H1 (cell line): ENCODE measurements at regions of chr5 and their contacts with region 1.

Region 1: DNA sequence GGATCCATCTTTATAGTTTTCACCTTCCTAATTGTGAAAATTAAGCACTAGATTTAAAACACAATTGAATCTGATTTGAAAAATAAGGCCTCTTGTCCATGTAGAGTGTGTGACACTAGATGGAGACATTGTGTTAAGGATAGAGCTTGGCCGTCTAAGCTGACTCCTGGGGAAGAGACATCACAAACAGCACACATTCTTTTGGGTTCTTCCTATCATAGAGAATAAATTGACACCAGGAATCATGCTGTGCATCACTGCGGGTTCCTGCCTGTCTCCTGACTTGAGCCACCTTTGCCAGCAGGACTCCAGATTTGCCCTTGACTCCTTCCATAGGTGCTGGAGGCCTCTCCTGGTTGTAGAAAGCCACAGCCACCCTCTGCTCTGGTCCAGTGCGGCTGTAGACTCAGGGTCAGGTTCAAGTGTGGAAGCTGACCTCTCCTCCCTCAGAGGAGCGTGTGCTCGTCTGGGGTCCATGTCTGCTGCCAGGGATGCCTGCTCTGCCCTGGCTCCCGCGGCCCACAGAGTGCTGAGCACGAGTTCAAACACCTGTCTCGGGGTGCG is 11.2 kb downstream of the ROPN1L start:
- DNase-seq: no peak
- H3K4me3 ChIP-seq: no peak overlapping the region
- H3K27ac ChIP-seq: no peak overlapping the region
- H3K4me1 ChIP-seq: peaks cover 3 to 14% (median 7%) of the 10 kb centered on the region in 4 experiments
- H3K27me3 ChIP-seq: no peaks in the 10 kb centered on the region
- CTCF ChIP-seq: peak in 2 of 3 experiments; percentile 74 to 79; a peak in 3 of 4 replicates
- EP300 ChIP-seq: no peak
- POLR2A ChIP-seq: no peak
- RAD21 ChIP-seq: peak; percentile 98 to 99

Region 2: DNA sequence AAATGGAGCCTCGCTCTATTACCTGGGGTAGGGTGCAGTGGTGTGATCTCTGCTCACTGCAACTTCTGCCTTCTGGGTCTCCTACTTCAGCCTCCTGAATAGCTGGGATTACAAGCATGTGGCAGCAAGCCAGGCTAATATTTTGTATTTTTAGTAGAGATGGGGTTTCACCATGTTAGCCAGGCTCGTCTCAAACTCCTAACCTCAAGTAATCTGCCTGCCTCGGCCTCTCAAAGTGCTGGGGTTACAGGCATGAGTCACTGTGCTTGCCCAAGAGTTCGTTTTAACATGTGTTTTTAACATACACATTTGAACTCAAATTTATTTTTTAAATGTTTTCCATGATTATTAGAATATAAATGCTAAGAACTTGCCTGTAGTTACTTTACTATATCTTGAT is 65.2 kb before region 1 on chr5:
- CTCF ChIA-PET with region 1: no interaction called
- POLR2A ChIA-PET with region 1: no interaction called
- DNase-seq: no peak
- H3K4me3 ChIP-seq: no peak overlapping the region
- H3K27ac ChIP-seq: no peak overlapping the region
- H3K4me1 ChIP-seq: no peaks in the 10 kb centered on the region
- H3K27me3 ChIP-seq: no peaks in the 10 kb centered on the region
- CTCF ChIP-seq: no peak
- EP300 ChIP-seq: no peak
- POLR2A ChIP-seq: no peak
- RAD21 ChIP-seq: no peak

Region 3: GRCh38 chr5:10441083-10441991 is 11.5 kb before region 1 on chr5 and contains the start of gene ROPN1L:
- CTCF ChIA-PET with region 1: interaction called, 56 read pairs
- POLR2A ChIA-PET with region 1: no interaction called
- DNase-seq: peak; percentile 68 to 93
- H3K4me3 ChIP-seq: peak within 1 kb of the TSS; percentile 41 to 83 (median 68)
- H3K27ac ChIP-seq: no peak within 1 kb of the TSS
- H3K4me1 ChIP-seq: peaks cover 0 to 6% (median 4%) of the 10 kb centered on the region in 4 experiments; a peak in 4 of 7 replicates
- H3K27me3 ChIP-seq: peaks cover 0 to 10% (median 6%) of the 10 kb centered on the region in 4 experiments; a peak in 5 of 7 replicates
- CTCF ChIP-seq: peak in 1 of 3 experiments; percentile 14; a peak in 1 of 4 replicates
- EP300 ChIP-seq: no peak
- POLR2A ChIP-seq: peak in 1 of 2 experiments; percentile 66; a peak in 1 of 3 replicates
- RAD21 ChIP-seq: peak in 1 of 2 experiments; percentile 9; a peak in 1 of 4 replicates
- total RNA-seq, gene ROPN1L: 0.38 and 0.73 TPM in 2 replicates

Region 4: DNA sequence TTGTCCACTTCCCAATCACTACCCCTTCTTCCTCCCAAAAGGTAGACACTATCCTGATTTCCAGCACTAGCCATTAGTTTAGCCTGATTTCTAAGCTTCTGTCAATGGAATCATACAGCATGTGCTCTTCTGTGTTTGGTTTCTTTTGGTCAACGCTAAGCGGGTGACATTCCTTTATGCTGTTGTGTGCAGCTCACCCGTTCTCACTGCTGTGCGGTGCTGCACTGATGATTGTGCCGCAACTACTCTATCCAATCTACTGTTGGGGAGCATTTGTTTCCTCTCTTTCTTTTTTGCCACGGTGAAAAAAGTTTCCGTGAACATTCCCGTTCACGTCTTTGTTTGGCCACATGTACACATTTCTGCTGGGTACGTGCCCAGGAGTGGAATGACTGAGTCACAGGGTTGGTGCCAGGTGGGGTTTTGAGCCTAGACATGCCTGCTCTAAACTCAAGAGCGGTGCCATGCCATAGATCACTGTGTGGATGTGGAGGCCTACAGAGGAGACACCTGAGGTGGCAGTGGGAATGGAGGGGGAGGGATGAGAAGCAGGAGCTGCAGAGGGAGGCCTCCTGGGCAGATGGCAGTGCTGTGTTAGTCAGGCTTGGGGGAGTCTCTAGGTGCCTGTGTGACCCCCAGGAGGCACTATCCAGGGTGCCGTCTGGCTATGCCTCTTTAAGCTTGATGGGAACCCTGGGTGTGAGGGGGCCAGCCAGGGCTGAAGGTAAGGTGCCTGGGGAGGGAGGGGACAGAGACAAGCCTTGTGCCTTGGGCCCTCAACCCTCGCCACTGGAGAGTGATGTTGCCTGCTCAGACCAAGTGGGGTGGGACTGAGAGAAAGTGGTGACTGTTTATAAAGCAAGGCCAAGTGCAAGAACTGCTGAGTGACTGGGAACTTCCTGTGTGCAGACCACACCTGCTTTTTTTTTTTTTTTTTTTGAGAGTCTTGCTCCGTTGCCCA is 99.6 kb after region 1 on chr5:
- CTCF ChIA-PET with region 1: interaction called, 10 read pairs
- POLR2A ChIA-PET with region 1: no interaction called
- DNase-seq: no peak
- H3K4me3 ChIP-seq: no peak overlapping the region
- H3K27ac ChIP-seq: peak overlapping the region; percentile 58; the same call in 1 of the 2 replicates
- H3K4me1 ChIP-seq: peaks cover 9 to 28% (median 11%) of the 10 kb centered on the region in 4 experiments
- H3K27me3 ChIP-seq: no peaks in the 10 kb centered on the region; a peak in 1 of 7 replicates
- CTCF ChIP-seq: no peak
- EP300 ChIP-seq: no peak
- POLR2A ChIP-seq: no peak
- RAD21 ChIP-seq: no peak

Region 5: DNA sequence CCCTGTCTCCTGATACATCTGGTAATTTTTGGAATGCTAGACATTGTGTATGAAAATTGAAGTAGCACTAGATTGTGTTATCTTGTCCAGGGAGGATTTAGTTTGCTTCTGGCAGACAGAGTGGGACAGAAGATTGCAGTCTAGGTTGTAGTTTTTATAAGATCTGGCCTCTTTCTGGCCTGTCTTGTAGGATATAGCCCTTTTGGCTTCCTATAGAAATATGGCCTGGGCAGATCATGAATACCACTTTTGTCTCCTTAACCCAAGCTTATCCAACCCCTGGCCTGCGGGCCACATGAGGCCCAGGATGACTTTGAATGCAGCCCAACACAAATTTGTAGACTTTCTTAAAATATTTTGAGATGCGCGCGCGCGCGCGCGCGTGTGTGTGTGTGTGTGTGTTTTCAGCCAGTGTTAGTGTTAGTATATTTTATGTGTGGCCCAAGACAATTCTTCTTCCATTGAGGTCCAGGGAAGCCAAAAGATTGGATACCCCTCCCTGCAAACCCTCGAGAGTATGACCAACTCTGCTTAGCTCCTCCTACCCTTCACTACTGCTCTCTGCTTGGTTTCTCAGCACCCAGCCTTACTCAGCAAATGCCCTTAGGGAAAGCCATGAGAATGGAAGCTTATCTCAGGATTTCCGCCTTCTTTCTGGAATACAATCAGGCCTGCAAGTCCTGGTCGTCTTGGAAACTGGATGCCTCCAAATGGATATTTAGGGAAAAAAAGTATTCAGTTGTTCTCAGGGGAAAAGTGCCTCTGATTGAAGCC is 137.6 kb after region 1 on chr5:
- CTCF ChIA-PET with region 1: interaction called, 13 read pairs
- POLR2A ChIA-PET with region 1: no interaction called
- DNase-seq: peak; percentile 46 to 53
- H3K4me3 ChIP-seq: no peak overlapping the region
- H3K27ac ChIP-seq: no peak overlapping the region
- H3K4me1 ChIP-seq: peaks cover 4 to 14% (median 5%) of the 10 kb centered on the region in 4 experiments
- H3K27me3 ChIP-seq: no peaks in the 10 kb centered on the region
- CTCF ChIP-seq: no peak
- EP300 ChIP-seq: no peak
- POLR2A ChIP-seq: no peak
- RAD21 ChIP-seq: no peak

Region 6: DNA sequence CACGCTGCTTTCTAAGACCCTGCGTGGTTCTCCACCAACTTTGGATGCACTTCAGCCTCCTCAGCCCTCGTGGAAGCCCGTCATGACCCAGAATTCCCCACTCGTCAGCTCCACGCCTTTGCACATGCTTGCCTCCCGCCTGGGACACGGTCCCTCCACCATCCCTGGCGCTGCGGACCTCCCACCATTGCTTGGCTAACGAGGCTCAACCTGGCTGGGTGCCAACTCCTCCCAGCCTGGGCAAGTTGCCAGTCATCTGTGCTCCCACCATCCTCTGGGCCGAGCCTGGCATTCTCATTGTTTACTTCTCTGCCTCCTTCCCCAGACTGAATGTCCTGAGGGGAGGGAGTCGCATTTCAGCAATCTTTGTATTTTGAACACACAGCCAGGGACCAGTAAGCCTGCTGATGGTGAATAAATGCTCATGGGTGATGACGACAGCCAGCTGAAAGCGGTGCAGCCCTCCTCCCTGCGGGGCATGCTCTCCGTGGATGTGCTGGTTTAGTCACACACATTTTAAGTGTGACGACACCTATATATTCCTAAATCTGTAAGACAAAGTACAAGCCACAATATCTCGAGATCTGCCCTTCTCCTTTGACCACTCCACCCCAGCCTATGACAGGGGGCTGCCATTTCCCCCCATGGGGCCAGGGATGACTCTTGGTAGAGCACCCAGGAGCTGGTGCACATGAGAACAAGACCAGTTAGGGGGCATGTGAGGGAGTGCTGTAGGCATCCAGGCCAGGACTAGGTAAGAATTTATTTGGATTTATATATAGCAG is 148.6 kb after region 1 on chr5:
- CTCF ChIA-PET with region 1: no interaction called
- POLR2A ChIA-PET with region 1: no interaction called
- DNase-seq: no peak
- H3K4me3 ChIP-seq: no peak overlapping the region
- H3K27ac ChIP-seq: no peak overlapping the region
- H3K4me1 ChIP-seq: peaks cover 0 to 6% (median 0%) of the 10 kb centered on the region in 4 experiments; a peak in 2 of 7 replicates
- H3K27me3 ChIP-seq: no peaks in the 10 kb centered on the region
- CTCF ChIP-seq: no peak
- EP300 ChIP-seq: no peak
- POLR2A ChIP-seq: no peak
- RAD21 ChIP-seq: no peak

Region 7: GRCh38 chr5:10671041-10672008 is 218.5 kb after region 1 on chr5:
- CTCF ChIA-PET with region 1: interaction called, 14 read pairs
- POLR2A ChIA-PET with region 1: no interaction called
- DNase-seq: no peak
- H3K4me3 ChIP-seq: no peak overlapping the region
- H3K27ac ChIP-seq: no peak overlapping the region
- H3K4me1 ChIP-seq: no peaks in the 10 kb centered on the region
- H3K27me3 ChIP-seq: no peaks in the 10 kb centered on the region
- CTCF ChIP-seq: no peak
- EP300 ChIP-seq: no peak
- POLR2A ChIP-seq: no peak
- RAD21 ChIP-seq: no peak

Region 8: DNA sequence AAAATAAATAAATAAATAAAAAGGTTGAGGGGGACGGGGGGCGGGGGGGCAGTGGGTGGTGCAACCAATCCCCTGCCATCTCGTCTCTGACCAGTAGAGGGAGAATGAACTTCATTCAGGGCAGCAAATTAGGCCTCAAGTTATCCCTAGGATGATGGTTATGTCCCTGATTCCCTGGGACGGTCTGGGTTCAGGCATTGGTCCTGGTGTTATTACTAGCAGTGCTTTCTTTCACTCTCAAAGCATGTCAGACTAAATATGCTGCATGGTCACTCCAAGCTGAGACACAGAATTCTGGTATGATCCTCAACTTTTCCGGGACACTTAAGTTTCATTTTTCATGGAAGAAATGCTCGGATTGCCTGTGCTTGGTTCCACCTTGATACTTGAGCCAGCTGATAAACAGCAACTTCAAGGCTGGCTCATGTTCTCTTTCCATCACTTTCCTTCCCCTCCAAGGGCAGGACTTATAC is 248.8 kb after region 1 on chr5:
- CTCF ChIA-PET with region 1: interaction called, 132 read pairs
- POLR2A ChIA-PET with region 1: no interaction called
- DNase-seq: peak in 1 of 2 experiments; percentile 73
- H3K4me3 ChIP-seq: no peak overlapping the region
- H3K27ac ChIP-seq: no peak overlapping the region
- H3K4me1 ChIP-seq: peaks cover 4 to 17% (median 8%) of the 10 kb centered on the region in 4 experiments
- H3K27me3 ChIP-seq: no peaks in the 10 kb centered on the region
- CTCF ChIP-seq: peak; percentile 48 to 67 (median 55)
- EP300 ChIP-seq: no peak
- POLR2A ChIP-seq: no peak
- RAD21 ChIP-seq: peak; percentile 55 to 56